Activated naive CD4-positive, alpha-beta T cell treated with anti-CD3 and anti-CD28 coated beads for 36 hours (primary cell): ENCODE measurements at regions of chr13 and their contacts with region 1.

Region 1: GRCh38 chr13:102214956-102215355 is 186.9 kb downstream of the FGF14 start:
- DNase-seq: no peak
- H3K4me3 Mint-ChIP-seq: no peak overlapping the region
- H3K27ac Mint-ChIP-seq: no peak overlapping the region
- H3K4me1 Mint-ChIP-seq: no peaks in the 10 kb centered on the region
- H3K27me3 Mint-ChIP-seq: peaks cover 5% of the 10 kb centered on the region

Region 2: GRCh38 chr13:102260247-102260646 is 45.3 kb after region 1 on chr13:
- CTCF ChIA-PET with region 1: no interaction called
- intact Hi-C with region 1: no loop called
- DNase-seq: no peak
- H3K4me3 Mint-ChIP-seq: no peak overlapping the region
- H3K27ac Mint-ChIP-seq: no peak overlapping the region
- H3K4me1 Mint-ChIP-seq: no peaks in the 10 kb centered on the region
- H3K27me3 Mint-ChIP-seq: peaks cover 12% of the 10 kb centered on the region

Region 3: GRCh38 chr13:103487841-103488240 is 1272.9 kb after region 1 on chr13:
- CTCF ChIA-PET with region 1: no interaction called
- intact Hi-C with region 1: loop called (anchors 5 kb)
- DNase-seq: no peak
- H3K4me3 Mint-ChIP-seq: no peak overlapping the region
- H3K27ac Mint-ChIP-seq: no peak overlapping the region
- H3K4me1 Mint-ChIP-seq: no peaks in the 10 kb centered on the region
- H3K27me3 Mint-ChIP-seq: no peaks in the 10 kb centered on the region